Transverse colon (tissue), 4 donors: ENCODE measurements at regions of chr7 and their contacts with region 1.

Region 1: GRCh38 chr7:96508371-96508770 is 186.5 kb upstream of the SLC25A13 start:
- DNase-seq: no peak
- H3K4me3 ChIP-seq: no peak overlapping the region
- H3K27ac ChIP-seq: no peak overlapping the region
- H3K4me1 ChIP-seq: peaks cover 0 to 3% (median 0%) of the 10 kb centered on the region in 4 donors
- H3K27me3 ChIP-seq: no peaks in the 10 kb centered on the region
- CTCF ChIP-seq: no peak
- EP300 ChIP-seq: no peak
- POLR2A ChIP-seq: no peak

Region 2: DNA sequence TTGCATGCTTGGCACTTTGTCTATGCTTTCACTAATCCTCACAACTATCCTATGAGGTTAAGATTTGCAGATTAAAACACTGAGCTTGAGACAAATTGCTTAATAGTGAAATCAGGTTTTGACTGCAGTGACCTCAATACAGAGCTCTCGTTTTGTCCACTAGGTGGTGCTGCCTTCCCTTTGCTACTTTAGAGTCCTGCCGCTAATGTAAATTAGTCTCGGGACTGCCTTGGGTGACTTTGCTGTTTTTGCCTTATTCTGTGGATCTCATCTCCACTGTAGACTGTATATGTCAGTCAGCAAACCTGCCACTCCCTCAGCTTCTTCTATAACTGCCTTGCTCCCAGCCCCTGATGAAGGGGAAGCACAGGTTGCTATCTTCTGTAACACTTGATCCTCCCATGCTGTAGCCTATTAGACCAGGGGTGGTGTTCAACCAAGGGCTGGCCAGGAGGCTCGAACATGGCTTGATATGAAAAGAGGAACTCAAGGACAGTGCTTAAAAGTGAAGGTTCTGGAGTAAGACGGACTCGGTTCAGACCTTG is 996.6 kb before region 1 on chr7:
- in situ Hi-C with region 1: no loop called
- intact Hi-C with region 1: no loop called
- DNase-seq: peak; percentile 76
- H3K4me3 ChIP-seq: no peak overlapping the region
- H3K27ac ChIP-seq: no peak overlapping the region
- H3K4me1 ChIP-seq: no peaks in the 10 kb centered on the region
- H3K27me3 ChIP-seq: peaks cover 3% of the 10 kb centered on the region
- CTCF ChIP-seq: peak; percentile 79 to 94 (median 89)
- EP300 ChIP-seq: no peak
- POLR2A ChIP-seq: no peak

Region 3: DNA sequence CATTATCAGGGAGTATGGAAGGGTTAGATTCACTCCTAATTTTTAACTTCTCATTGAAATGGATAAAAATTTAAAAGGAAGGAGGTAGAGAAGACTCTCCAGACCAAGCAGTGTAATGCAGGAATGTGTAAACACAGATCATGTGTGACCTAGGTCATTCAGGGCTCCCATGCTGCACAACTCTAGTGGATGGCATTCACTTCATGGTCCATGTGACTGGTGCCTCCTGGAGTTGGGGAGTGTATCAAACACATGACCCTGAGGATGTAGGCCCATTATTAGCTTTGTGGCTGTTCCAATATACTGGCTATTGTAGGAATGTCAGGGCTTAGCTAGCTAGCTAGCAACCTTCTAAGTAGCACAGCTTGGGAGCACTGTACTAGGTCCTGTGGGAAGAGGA is 296.4 kb before region 1 on chr7:
- in situ Hi-C with region 1: no loop called
- intact Hi-C with region 1: loop called (anchors 2 kb)
- DNase-seq: no peak
- H3K4me3 ChIP-seq: no peak overlapping the region
- H3K27ac ChIP-seq: no peak overlapping the region
- H3K4me1 ChIP-seq: no peaks in the 10 kb centered on the region
- H3K27me3 ChIP-seq: no peaks in the 10 kb centered on the region
- CTCF ChIP-seq: no peak
- EP300 ChIP-seq: no peak
- POLR2A ChIP-seq: no peak

Region 4: GRCh38 chr7:96685353-96685752 is 177.0 kb after region 1 on chr7:
- in situ Hi-C with region 1: no loop called
- intact Hi-C with region 1: no loop called
- DNase-seq: no peak
- H3K4me3 ChIP-seq: no peak overlapping the region
- H3K27ac ChIP-seq: no peak overlapping the region
- H3K4me1 ChIP-seq: peaks cover 0 to 14% (median 0%) of the 10 kb centered on the region in 4 donors
- H3K27me3 ChIP-seq: no peaks in the 10 kb centered on the region
- CTCF ChIP-seq: no peak
- EP300 ChIP-seq: no peak
- POLR2A ChIP-seq: no peak